Activated naive CD4-positive, alpha-beta T cell treated with anti-CD3 and anti-CD28 coated beads for 36 hours (primary cell): ENCODE measurements at regions of chr12 and their contacts with region 1.

Region 1: GRCh38 chr12:97148941-97149559 is 242.0 kb downstream of the NEDD1 start:
- DNase-seq: peak; percentile 62
- H3K4me3 Mint-ChIP-seq: no peak overlapping the region
- H3K27ac Mint-ChIP-seq: no peak overlapping the region
- H3K4me1 Mint-ChIP-seq: no peaks in the 10 kb centered on the region
- H3K27me3 Mint-ChIP-seq: peaks cover 10% of the 10 kb centered on the region

Region 2: GRCh38 chr12:97308576-97309198 is 159.6 kb after region 1 on chr12:
- CTCF ChIA-PET with region 1: interaction called, 6 read pairs
- intact Hi-C with region 1: loop called (anchors 1 kb)
- DNase-seq: no peak
- H3K4me3 Mint-ChIP-seq: no peak overlapping the region
- H3K27ac Mint-ChIP-seq: no peak overlapping the region
- H3K4me1 Mint-ChIP-seq: no peaks in the 10 kb centered on the region
- H3K27me3 Mint-ChIP-seq: peaks cover 5% of the 10 kb centered on the region

Region 3: GRCh38 chr12:97404543-97404942 is 255.5 kb after region 1 on chr12:
- CTCF ChIA-PET with region 1: no interaction called
- intact Hi-C with region 1: loop called (anchors 2 kb)
- DNase-seq: peak; percentile 39
- H3K4me3 Mint-ChIP-seq: no peak overlapping the region
- H3K27ac Mint-ChIP-seq: no peak overlapping the region
- H3K4me1 Mint-ChIP-seq: no peaks in the 10 kb centered on the region
- H3K27me3 Mint-ChIP-seq: no peaks in the 10 kb centered on the region

Region 4: DNA sequence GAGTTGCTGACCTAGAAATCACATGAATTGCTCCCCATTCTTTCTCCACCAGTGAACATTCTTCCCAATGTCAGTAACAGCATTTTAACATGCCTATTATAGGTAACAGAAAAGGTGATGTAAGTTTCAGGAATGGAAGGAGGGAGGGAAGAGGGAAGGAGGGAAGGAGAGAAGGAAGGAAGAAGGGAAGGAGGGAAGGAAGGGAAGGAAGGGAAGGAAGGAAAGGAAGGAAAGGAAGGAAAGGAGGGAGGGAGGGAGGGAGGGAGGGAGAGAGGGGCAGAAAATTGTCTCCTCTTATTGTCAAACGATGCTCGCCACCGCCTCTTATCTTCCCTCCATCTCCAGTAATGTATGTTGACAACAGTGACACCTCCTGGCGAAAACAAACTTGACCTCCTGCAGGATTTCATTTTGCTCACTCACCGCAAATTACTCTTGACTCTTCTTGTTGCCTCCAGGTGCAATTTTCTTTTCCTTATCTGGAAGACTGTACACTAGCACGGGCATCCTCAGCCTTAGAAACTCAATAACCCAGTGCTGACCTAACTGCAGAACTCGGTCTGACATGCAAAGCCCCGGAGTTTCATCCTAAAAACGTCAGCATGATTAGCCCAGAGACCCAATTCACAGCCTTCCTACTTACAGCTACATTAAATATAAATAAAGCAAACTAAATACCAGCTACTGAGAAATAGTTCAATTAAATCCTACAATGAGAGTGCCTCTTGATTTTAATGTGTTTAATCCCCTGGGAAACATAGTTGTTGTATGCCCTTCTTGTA is 853.9 kb after region 1 on chr12:
- CTCF ChIA-PET with region 1: interaction called, 5 read pairs
- intact Hi-C with region 1: loop called (anchors 1 kb)
- DNase-seq: peak; percentile 58
- H3K4me3 Mint-ChIP-seq: no peak overlapping the region
- H3K27ac Mint-ChIP-seq: no peak overlapping the region
- H3K4me1 Mint-ChIP-seq: peaks cover 3% of the 10 kb centered on the region
- H3K27me3 Mint-ChIP-seq: peaks cover 7% of the 10 kb centered on the region

Region 5: DNA sequence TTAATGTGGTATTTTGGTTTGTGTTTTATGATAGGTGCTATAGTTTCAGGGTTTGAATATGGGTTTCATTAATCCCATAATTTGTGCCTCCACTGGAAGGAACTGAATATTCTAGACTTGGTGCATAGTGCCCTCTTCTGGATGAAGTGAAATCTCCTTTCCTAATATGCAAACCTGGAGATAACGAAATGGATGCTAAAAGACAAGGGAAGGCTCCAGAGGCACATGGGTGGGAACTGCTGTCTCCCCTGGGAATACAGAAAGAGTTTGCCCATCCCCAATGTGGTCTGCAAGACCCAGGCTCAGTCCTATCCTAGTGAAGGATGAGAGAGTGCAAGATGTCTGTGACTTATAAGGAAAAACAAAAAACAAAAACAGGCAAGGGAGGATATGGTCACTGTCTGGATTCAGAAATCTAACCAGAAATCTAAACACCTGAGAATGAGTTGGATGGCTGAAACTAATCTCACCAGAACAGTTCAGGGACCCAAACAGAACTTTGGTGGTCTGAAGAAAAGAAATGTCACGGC is 1224.0 kb after region 1 on chr12:
- CTCF ChIA-PET with region 1: interaction called, 3 read pairs
- intact Hi-C with region 1: loop called (anchors 1 kb)
- DNase-seq: no peak
- H3K4me3 Mint-ChIP-seq: no peak overlapping the region
- H3K27ac Mint-ChIP-seq: no peak overlapping the region
- H3K4me1 Mint-ChIP-seq: peaks cover 9% of the 10 kb centered on the region
- H3K27me3 Mint-ChIP-seq: peaks cover 30% of the 10 kb centered on the region